ENCODE measurements at regions of chr15 and their contacts with region 1.

Region 1: GRCh38 chr15:37181339-37181738 is 81.0 kb upstream of the MEIS2 start:
- DNase-seq: no peak
- ATAC-seq: no peak
- H3K4me3 ChIP-seq: no peak overlapping the region
- H3K27ac ChIP-seq: no peak overlapping the region
- H3K4me1 ChIP-seq: no peaks in the 10 kb centered on the region
- H3K27me3 ChIP-seq: no peaks in the 10 kb centered on the region
- CTCF ChIP-seq: no peak
- EP300 ChIP-seq: no peak
- POLR2A ChIP-seq: no peak
- RAD21 ChIP-seq: no peak

Region 2: GRCh38 chr15:37246065-37246464 is 64.7 kb after region 1 on chr15:
- CTCF ChIA-PET with region 1: no interaction called
- POLR2A ChIA-PET with region 1: no interaction called
- RAD21 ChIA-PET with region 1: no interaction called
- SMC1A ChIA-PET with region 1: no interaction called
- in situ Hi-C with region 1: no loop called
- intact Hi-C with region 1: loop called (anchors 10 kb)
- DNase-seq: no peak
- ATAC-seq: no peak
- H3K4me3 ChIP-seq: no peak overlapping the region
- H3K27ac ChIP-seq: no peak overlapping the region
- H3K4me1 ChIP-seq: no peaks in the 10 kb centered on the region
- H3K27me3 ChIP-seq: no peaks in the 10 kb centered on the region
- CTCF ChIP-seq: no peak
- EP300 ChIP-seq: no peak
- POLR2A ChIP-seq: no peak
- RAD21 ChIP-seq: no peak